ENCODE measurements at regions of chr15 and their contacts with region 1.

Region 1: GRCh38 chr15:31128919-31129768 is 27.6 kb upstream of the TRPM1 start:
- DNase-seq: peak; percentile 78
- H3K4me3 ChIP-seq: peak overlapping the region in 1 of 2 experiments; percentile 42; a peak in 1 of 4 replicates
- H3K27ac ChIP-seq: no peak overlapping the region
- H3K4me1 ChIP-seq: peaks cover 0 to 13% of the 10 kb centered on the region in 2 experiments; a peak in 1 of 4 replicates
- H3K27me3 ChIP-seq: no peaks in the 10 kb centered on the region
- CTCF ChIP-seq: peak; percentile 98
- EP300 ChIP-seq: no peak
- RAD21 ChIP-seq: peak; percentile 94

Region 2: DNA sequence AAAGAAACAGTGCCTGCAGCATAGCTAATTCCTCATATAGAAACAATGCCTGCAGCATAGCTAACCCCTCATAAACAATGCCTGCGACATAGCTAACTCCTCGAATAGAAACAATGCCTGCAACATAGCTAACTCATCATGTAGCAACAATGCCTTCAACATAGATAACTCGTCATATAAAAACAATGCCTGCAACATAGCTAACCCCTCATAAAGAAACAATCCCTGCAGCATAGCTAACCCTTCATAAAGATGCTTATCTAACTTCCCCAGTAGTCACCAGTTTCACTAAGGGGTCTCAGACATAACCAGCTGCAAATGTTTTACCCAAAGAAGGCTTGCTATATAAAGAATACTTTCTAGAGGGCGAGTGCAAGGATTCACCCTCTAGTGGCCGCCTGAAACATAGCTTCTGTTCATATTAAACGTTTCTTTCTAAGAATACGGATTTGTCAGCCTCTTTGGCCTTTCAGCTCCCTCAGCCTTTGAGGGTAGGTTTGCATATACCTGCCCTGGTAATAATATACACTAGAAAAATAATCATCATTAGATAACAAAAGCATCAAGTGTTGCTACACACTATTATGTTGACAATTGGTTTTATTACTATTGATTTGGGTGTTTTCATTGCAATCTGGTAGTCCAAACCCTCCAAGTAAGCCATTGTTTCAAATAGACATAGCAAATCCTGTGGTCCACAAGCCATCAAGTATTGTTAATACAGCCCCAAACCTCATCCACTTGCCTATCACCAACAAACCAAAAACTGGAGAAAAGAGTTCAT is 269.9 kb before region 1 on chr15:
- CTCF ChIA-PET with region 1: interaction called, 26 read pairs
- POLR2A ChIA-PET with region 1: no interaction called
- DNase-seq: peak; percentile 47
- H3K4me3 ChIP-seq: no peak overlapping the region; a peak in 1 of 4 replicates
- H3K27ac ChIP-seq: no peak overlapping the region
- H3K4me1 ChIP-seq: no peaks in the 10 kb centered on the region
- H3K27me3 ChIP-seq: no peaks in the 10 kb centered on the region
- CTCF ChIP-seq: peak; percentile 72
- EP300 ChIP-seq: no peak
- RAD21 ChIP-seq: peak; percentile 58

Region 3: DNA sequence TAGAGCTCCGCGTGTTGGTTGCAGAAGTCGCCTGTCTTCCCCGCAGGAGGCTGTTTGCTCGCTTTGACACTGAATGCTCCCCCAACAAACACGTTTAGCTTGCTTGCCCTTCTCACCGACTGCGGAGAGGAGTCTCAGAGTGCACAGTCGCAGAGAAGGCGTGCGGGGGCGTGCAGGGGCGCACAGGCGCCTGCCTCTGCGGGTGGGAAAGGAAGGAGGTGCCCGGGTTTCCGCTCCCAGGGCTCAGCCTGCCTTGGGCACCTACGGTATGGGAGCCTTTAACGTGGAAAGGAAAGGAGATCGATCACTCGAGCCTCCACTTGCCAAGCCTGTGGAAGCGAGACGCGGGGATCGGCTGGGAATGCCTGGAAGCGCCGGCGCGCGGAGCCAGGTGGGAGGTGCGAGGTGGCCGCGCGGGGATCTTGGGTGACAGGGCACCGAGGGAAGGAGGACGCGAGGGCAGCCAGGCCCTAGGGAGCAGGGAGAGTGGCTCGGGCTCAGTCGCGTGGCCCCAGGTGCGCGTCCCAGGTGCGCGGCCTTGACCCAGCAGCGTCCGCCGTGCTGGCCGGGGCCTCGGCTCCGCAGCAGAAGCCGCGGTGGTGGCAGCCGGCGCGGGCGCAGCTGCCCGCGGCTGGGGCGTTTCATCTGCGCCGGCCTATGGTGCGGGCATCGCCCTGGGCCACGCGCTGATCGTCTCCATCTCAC is 225.5 kb before region 1 on chr15 and contains the start of gene FAN1:
- CTCF ChIA-PET with region 1: interaction called, 14 read pairs
- POLR2A ChIA-PET with region 1: no interaction called
- DNase-seq: peak; percentile 94
- H3K4me3 ChIP-seq: peak within 1 kb of the TSS; percentile 68 to 88
- H3K27ac ChIP-seq: peak within 1 kb of the TSS; percentile 53 to 85
- H3K4me1 ChIP-seq: peaks cover 4 to 7% of the 10 kb centered on the region in 2 experiments; a peak in 3 of 4 replicates
- H3K27me3 ChIP-seq: no peaks in the 10 kb centered on the region
- CTCF ChIP-seq: no peak
- EP300 ChIP-seq: peak in 1 of 2 experiments; percentile 32; a peak in 1 of 4 replicates
- RAD21 ChIP-seq: peak; percentile 37
- polyA plus RNA-seq, gene FAN1: 5.7 and 9.7 TPM in 2 replicates

Region 4: DNA sequence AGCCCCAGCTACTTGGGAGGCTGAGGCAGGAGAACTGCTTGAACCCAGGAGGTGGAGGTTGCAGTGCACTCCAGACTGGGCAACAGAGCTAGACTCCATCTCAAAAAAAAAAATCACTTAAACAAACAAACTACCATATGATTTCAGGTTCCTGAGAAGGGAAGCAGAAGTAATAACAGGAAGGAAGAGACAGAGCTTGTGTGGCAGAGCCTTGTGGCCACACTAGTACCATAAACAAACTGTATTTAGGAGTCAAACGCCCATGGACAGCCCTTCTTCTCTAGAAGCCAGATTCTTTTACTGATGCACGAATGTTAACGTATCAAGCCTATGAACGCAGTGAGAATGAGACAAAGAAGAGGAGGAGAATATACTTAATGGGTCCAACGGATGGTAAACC is 149.7 kb before region 1 on chr15:
- CTCF ChIA-PET with region 1: interaction called, 29 read pairs
- POLR2A ChIA-PET with region 1: no interaction called
- DNase-seq: no peak
- H3K4me3 ChIP-seq: no peak overlapping the region
- H3K27ac ChIP-seq: no peak overlapping the region
- H3K4me1 ChIP-seq: peaks cover 0 to 5% of the 10 kb centered on the region in 2 experiments; a peak in 2 of 4 replicates
- H3K27me3 ChIP-seq: no peaks in the 10 kb centered on the region
- CTCF ChIP-seq: no peak
- EP300 ChIP-seq: no peak
- RAD21 ChIP-seq: no peak

Region 5: DNA sequence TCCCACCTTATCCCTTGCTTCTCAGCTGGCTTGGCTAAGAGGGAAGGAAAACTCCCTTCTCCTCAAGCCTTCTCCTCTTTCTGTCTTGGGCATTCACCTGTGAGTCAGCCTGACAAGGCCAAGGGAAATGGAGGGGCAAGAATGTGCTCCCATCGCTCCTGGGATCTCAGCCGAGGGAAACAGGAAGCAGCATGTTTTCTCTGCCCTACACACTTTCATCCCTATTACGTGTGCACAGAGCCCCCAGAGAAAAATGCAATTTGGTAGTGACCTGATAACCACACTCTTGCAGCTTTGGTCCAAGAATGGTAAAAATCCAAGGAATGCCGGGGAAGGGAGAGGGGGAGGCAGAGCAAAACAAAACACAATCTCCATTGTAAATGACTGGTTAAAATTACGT is 104.8 kb before region 1 on chr15:
- CTCF ChIA-PET with region 1: interaction called, 12 read pairs
- POLR2A ChIA-PET with region 1: no interaction called
- DNase-seq: no peak
- H3K4me3 ChIP-seq: no peak overlapping the region
- H3K27ac ChIP-seq: peak overlapping the region; percentile 48 to 57; a peak in 3 of 4 replicates
- H3K4me1 ChIP-seq: peaks cover 16 to 22% of the 10 kb centered on the region in 2 experiments; a peak in 2 of 4 replicates
- H3K27me3 ChIP-seq: no peaks in the 10 kb centered on the region
- CTCF ChIP-seq: no peak
- EP300 ChIP-seq: peak; percentile 14 to 83; a peak in 1 of 4 replicates
- RAD21 ChIP-seq: no peak

Region 6: DNA sequence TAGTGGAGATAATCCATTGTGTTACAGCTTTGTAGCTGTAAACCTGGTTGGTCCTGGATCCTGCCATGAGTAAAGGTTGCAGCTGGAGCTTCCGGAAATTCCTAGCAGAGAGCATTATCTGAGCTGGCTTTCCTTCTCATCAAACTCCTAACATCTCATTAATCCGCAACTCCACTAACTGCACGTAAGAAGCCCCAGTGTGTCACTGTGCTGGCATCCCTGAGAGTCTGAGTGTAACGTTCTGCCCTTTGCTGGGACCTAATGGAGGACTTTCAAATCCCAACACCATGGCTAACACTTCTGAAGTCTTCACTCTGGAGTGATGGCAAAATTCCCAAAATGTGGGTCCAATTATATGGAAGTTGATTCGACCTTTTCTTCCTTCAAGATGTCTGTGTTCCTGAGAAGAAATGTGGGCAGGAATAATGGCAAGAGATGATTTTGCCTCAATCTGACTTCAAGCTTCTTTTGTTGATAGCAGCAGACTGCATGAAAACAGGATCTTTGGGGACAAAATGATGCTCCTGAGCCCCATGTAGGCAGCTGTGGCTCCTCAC is 18.0 kb before region 1 on chr15:
- CTCF ChIA-PET with region 1: interaction called, 40 read pairs
- POLR2A ChIA-PET with region 1: no interaction called
- DNase-seq: no peak
- H3K4me3 ChIP-seq: no peak overlapping the region
- H3K27ac ChIP-seq: no peak overlapping the region
- H3K4me1 ChIP-seq: no peaks in the 10 kb centered on the region
- H3K27me3 ChIP-seq: no peaks in the 10 kb centered on the region
- CTCF ChIP-seq: no peak
- EP300 ChIP-seq: no peak
- RAD21 ChIP-seq: no peak

Region 7: DNA sequence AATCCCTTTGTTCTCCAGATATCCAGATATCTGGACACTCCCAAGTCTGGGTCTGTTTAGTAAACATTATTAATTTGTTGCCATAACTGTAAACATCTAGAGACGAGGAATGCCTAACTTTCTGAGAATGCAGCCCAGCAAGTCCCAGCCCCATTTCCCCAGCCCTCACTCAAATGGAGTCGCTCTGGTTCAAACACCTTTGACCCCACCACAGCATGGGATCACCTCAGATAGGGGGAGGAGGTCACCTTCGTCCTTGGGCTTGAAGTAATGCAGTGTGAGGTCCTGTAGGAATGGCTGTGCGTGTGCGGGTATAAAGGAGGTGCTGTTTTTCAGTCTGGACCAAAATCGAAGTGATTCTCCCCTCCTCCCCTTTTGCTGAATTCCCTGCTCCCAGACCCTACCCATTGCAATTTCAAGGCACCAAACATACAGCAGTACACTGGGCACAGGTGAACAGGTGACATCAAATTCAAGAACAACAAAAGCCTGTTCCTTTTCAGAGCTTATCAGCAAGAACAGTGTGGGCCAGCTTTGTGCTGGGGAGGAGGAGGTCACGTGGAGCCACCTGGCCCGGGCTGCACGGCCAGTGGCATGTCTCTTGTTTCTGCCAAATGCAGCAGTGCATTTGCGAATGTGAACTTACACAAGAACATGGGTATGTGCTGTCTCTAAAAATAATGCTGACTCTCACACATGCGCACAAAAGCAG is 29.9 kb after region 1 on chr15:
- CTCF ChIA-PET with region 1: interaction called, 12 read pairs
- POLR2A ChIA-PET with region 1: no interaction called
- DNase-seq: no peak
- H3K4me3 ChIP-seq: no peak overlapping the region
- H3K27ac ChIP-seq: no peak overlapping the region
- H3K4me1 ChIP-seq: peaks cover 0 to 16% of the 10 kb centered on the region in 2 experiments; a peak in 1 of 4 replicates
- H3K27me3 ChIP-seq: no peaks in the 10 kb centered on the region; the same call in 1 of the 2 replicates
- CTCF ChIP-seq: no peak
- EP300 ChIP-seq: no peak
- RAD21 ChIP-seq: no peak

Measured in SK-N-SH (cell line).